PC-9 (cell line): ENCODE measurements at regions of chr14 and their contacts with region 1.

Region 1: DNA sequence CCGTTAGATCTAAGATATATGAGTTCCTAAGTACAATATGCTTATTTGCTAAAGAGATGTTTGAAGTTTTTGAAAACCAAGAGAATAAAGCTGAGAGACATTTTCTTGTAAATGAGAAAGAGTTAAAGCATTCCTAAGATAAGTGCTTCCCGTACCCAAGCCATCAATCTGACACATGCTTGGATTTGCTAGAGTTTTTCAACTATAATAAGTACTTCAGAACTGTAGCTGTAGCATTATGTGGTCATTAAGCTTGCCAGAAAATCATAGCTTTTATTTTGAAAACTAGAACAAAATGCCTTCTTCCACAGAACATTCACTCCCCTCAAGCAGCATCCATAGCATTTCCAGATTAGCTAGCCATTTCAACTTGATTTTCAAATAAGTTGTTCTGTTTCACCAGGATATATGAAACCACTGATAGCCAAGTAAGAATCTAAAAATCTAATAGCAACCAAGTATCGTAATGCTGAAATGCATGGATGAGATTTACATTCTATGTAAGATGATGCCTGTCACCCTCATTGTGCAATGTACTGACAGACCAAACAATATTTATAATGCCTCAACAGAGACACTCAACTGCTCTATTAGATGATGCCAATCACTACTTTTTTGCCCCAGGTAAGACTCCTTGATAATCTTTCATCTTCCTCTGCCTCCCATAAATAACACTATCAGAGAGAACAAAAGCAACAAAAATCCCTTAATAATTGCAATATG is 8.0 kb downstream of the SNW1 start:
- DNase-seq: no peak
- H3K4me3 ChIP-seq: no peak overlapping the region
- H3K27ac ChIP-seq: no peak overlapping the region
- H3K4me1 ChIP-seq: no peaks in the 10 kb centered on the region
- H3K27me3 ChIP-seq: no peaks in the 10 kb centered on the region
- CTCF ChIP-seq: no peak

Region 2: GRCh38 chr14:77681196-77682157 is 71.5 kb before region 1 on chr14:
- CTCF ChIA-PET with region 1: no interaction called
- POLR2A ChIA-PET with region 1: no interaction called
- intact Hi-C with region 1: no loop called
- DNase-seq: peak in 1 of 2 experiments; percentile 61
- H3K4me3 ChIP-seq: no peak overlapping the region
- H3K27ac ChIP-seq: peak overlapping the region; percentile 42
- H3K4me1 ChIP-seq: peaks cover 21% of the 10 kb centered on the region
- H3K27me3 ChIP-seq: no peaks in the 10 kb centered on the region
- CTCF ChIP-seq: no peak

Region 3: GRCh38 chr14:77730976-77731497 is 21.9 kb before region 1 on chr14:
- CTCF ChIA-PET with region 1: no interaction called
- POLR2A ChIA-PET with region 1: interaction called, 3 read pairs
- intact Hi-C with region 1: loop called (anchors 2 kb)
- DNase-seq: no peak
- H3K4me3 ChIP-seq: no peak overlapping the region
- H3K27ac ChIP-seq: no peak overlapping the region
- H3K4me1 ChIP-seq: no peaks in the 10 kb centered on the region
- H3K27me3 ChIP-seq: no peaks in the 10 kb centered on the region
- CTCF ChIP-seq: no peak

Region 4: GRCh38 chr14:77790566-77791224 is 37.7 kb after region 1 on chr14:
- CTCF ChIA-PET with region 1: no interaction called
- POLR2A ChIA-PET with region 1: interaction called, 10 read pairs
- intact Hi-C with region 1: no loop called
- DNase-seq: no peak
- H3K4me3 ChIP-seq: no peak overlapping the region
- H3K27ac ChIP-seq: no peak overlapping the region
- H3K4me1 ChIP-seq: peaks cover 25% of the 10 kb centered on the region
- H3K27me3 ChIP-seq: no peaks in the 10 kb centered on the region
- CTCF ChIP-seq: no peak

Region 5: DNA sequence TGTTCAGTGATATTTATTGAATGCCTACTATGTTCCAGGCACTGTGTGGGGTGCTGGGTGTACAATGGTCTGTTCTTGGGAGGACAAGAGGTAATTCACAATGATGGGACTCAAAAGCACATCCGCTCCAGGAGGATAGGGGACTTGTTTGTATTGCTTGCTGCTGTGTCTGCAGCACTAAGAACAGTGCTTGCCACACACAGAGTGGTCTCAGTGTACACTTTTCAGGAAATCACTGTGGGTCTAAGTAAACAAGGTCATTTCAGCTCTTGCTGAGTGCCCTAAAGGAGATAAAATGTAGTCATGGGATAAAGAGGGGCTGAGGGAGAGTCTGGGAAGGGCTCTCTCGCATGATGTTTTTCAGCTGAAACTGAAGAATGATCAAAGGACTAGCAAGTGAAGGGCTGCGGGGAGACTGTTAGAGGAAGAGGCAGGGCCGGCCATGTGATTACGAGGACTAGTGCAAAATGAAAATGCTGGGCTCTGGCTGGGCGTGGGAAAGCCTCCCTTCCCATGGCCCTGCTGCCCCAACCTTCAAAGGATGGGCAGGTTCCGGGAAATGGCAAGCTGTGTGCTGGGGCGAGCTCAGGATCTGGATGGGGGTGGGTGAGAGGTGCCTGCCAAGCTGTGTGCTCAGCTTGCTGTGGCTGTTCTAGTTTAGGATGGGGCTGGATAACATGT is 86.0 kb after region 1 on chr14:
- CTCF ChIA-PET with region 1: no interaction called
- POLR2A ChIA-PET with region 1: no interaction called
- intact Hi-C with region 1: no loop called
- DNase-seq: no peak
- H3K4me3 ChIP-seq: no peak overlapping the region
- H3K27ac ChIP-seq: no peak overlapping the region
- H3K4me1 ChIP-seq: no peaks in the 10 kb centered on the region
- H3K27me3 ChIP-seq: no peaks in the 10 kb centered on the region
- CTCF ChIP-seq: no peak